ENCODE measurements at regions of chr6 and their contacts with region 1.

Region 1: GRCh38 chr6:101386982-101387381 is 6.5 kb upstream of the GRIK2 start:
- DNase-seq: no peak
- ATAC-seq: peak; percentile 63; the same call in 1 of the 2 replicates
- H3K4me3 ChIP-seq: no peak overlapping the region
- H3K27ac ChIP-seq: no peak overlapping the region
- H3K4me1 ChIP-seq: no peaks in the 10 kb centered on the region; the same call in 1 of the 2 replicates
- H3K27me3 ChIP-seq: peaks cover 1% of the 10 kb centered on the region; the same call in 1 of the 2 replicates
- CTCF ChIP-seq: peak; percentile 42
- POLR2A ChIP-seq: no peak
- RAD21 ChIP-seq: no peak

Region 2: DNA sequence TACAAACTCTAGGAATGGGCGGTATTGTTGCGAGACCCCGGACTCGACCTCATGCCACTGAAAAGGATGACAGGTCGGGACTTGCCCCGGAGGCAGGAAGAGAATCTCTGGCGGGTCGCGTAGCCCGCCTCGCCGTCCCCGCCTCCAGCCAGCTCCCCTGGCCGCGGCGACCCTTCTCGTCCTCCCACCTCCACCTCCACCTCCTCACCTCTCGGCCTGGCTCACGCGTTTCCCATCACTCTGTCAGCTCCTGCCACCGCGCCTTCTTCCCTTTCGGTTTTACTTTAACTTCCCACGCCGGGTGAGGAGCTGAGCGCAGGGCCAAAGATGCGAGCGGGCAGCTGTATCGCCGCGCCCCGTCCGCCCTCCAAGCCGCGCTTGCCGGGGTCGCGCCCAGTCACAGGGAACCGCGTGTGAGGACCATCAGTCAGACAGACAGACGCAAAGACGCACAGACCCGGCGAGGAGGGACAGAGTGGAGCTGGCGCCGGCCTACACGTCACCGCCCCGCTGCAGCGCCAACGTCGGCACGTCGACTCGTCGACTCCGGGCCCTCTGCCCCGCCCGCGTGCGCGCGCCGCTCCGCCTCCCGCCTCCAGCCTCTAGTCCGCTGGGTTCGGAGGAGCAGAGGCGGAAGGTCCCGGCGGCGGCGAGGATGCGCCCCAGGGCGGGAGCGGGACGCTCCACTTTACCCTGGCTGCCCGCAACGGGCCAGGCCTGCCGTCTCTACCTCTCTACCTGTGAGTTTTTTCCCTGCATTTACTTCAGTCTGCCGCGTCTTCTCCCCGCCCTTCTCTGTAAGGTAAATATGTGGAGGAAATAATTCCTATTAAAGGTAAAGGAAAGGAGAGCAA is 505.9 kb before region 1 on chr6 and contains the start of gene ASCC3:
- CTCF ChIA-PET with region 1: no interaction called
- POLR2A ChIA-PET with region 1: no interaction called
- dilution Hi-C with region 1: no loop called
- in situ Hi-C with region 1: no loop called
- intact Hi-C with region 1: loop called (anchors 10 kb)
- DNase-seq: peak; percentile 88
- ATAC-seq: peak; percentile 99
- H3K4me3 ChIP-seq: peak within 1 kb of the TSS; percentile 95
- H3K27ac ChIP-seq: peak within 1 kb of the TSS; percentile 89
- H3K4me1 ChIP-seq: peaks cover 14% of the 10 kb centered on the region
- H3K27me3 ChIP-seq: no peaks in the 10 kb centered on the region
- CTCF ChIP-seq: no peak
- POLR2A ChIP-seq: peak; percentile 76; the same call in 1 of the 2 replicates
- RAD21 ChIP-seq: no peak
- total RNA-seq, gene ASCC3: 104 and 155 TPM in 2 replicates

Region 3: GRCh38 chr6:101249470-101249869 is 137.5 kb before region 1 on chr6:
- CTCF ChIA-PET with region 1: no interaction called
- POLR2A ChIA-PET with region 1: no interaction called
- dilution Hi-C with region 1: no loop called
- in situ Hi-C with region 1: no loop called
- intact Hi-C with region 1: no loop called
- DNase-seq: no peak
- ATAC-seq: no peak
- H3K4me3 ChIP-seq: no peak overlapping the region
- H3K27ac ChIP-seq: no peak overlapping the region
- H3K4me1 ChIP-seq: no peaks in the 10 kb centered on the region
- H3K27me3 ChIP-seq: no peaks in the 10 kb centered on the region
- CTCF ChIP-seq: no peak
- POLR2A ChIP-seq: no peak
- RAD21 ChIP-seq: no peak

Region 4: DNA sequence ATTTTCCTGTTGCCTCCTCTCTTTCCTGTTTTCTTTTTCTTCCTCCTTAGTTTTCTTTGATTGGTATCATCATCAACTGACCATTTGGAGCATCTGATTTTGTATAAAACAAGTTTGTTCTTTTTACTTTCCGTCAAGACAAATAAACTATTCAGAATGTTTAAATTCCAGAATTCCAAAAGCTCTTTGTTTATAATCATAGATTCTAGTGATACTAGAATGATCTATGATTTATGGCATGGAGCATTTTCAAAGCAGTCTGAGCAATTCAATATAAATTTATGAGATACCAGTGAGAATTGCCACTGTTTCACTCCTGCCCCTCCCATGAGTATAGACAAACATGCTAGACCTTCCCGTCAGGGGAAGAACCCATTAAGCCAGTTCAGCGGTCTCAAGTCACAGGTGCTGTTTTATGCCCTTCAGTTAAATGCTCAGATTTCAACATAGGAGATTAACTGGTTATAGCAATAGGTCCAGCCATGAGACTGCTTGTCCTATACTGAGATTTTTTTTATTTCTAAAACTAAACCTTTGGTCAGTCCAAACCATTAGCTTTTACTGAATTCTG is 67.2 kb after region 1 on chr6:
- CTCF ChIA-PET with region 1: no interaction called
- POLR2A ChIA-PET with region 1: no interaction called
- dilution Hi-C with region 1: no loop called
- in situ Hi-C with region 1: no loop called
- intact Hi-C with region 1: no loop called
- DNase-seq: peak; percentile 30
- ATAC-seq: peak; percentile 56
- H3K4me3 ChIP-seq: no peak overlapping the region
- H3K27ac ChIP-seq: no peak overlapping the region
- H3K4me1 ChIP-seq: peaks cover 7% of the 10 kb centered on the region; the same call in 1 of the 2 replicates
- H3K27me3 ChIP-seq: no peaks in the 10 kb centered on the region
- CTCF ChIP-seq: no peak
- POLR2A ChIP-seq: no peak
- RAD21 ChIP-seq: no peak

Region 5: DNA sequence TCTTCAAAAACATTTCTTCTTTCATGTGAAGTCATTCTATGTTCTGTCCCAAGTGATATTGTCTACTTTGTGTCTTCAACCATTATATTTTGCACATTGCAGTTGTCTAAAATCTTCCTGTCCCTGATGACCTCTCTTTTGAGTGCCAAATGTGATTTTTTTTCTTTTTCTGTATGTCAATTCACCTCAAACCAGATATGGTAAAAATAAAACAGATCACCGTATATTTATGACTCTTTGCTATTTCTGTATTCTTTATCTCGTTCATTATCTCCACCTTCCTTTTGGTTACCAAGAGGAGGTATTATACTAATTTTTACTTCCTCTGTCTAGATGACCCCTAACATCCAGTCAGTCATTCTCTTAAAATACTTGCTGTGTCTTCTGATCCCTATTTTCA is 171.7 kb after region 1 on chr6:
- CTCF ChIA-PET with region 1: no interaction called
- POLR2A ChIA-PET with region 1: no interaction called
- dilution Hi-C with region 1: no loop called
- in situ Hi-C with region 1: no loop called
- intact Hi-C with region 1: no loop called
- DNase-seq: no peak
- ATAC-seq: no peak
- H3K4me3 ChIP-seq: no peak overlapping the region
- H3K27ac ChIP-seq: no peak overlapping the region
- H3K4me1 ChIP-seq: peaks cover 2% of the 10 kb centered on the region
- H3K27me3 ChIP-seq: no peaks in the 10 kb centered on the region
- CTCF ChIP-seq: no peak
- POLR2A ChIP-seq: no peak
- RAD21 ChIP-seq: no peak

Measured in IMR-90 (cell line).